Naive thymus-derived CD4-positive, alpha-beta T cell (primary cell): ENCODE measurements at regions of chr12 and their contacts with region 1.

Region 1: GRCh38 chr12:93378373-93379325 is 924 bp downstream of the NUDT4 start:
- DNase-seq: peak; percentile 47 to 73 (median 69)
- ATAC-seq: peak; percentile 60
- H3K4me3 ChIP-seq: peak overlapping the region; percentile 76
- H3K4me3 Mint-ChIP-seq: peak overlapping the region; percentile 98 to 100 (median 99)
- H3K27ac ChIP-seq: peak overlapping the region; percentile 94
- H3K27ac Mint-ChIP-seq: peak overlapping the region; percentile 94 to 100 (median 99)
- H3K4me1 ChIP-seq: peaks cover 19 to 22% of the 10 kb centered on the region in 2 donors
- H3K4me1 Mint-ChIP-seq: peaks cover 34 to 62% (median 51%) of the 10 kb centered on the region in 7 donors
- H3K27me3 ChIP-seq: no peaks in the 10 kb centered on the region
- H3K27me3 Mint-ChIP-seq: no peaks in the 10 kb centered on the region

Region 2: GRCh38 chr12:92593734-92594402 is 784.8 kb before region 1 on chr12:
- CTCF ChIA-PET with region 1: no interaction called
- POLR2A ChIA-PET with region 1: no interaction called
- intact Hi-C with region 1: loop called in 1 of 2 experiments (anchors 5 kb)
- DNase-seq: peak; percentile 51 to 97 (median 92)
- ATAC-seq: peak; percentile 95
- H3K4me3 ChIP-seq: peak overlapping the region; percentile 16
- H3K4me3 Mint-ChIP-seq: peak overlapping the region; percentile 22 to 83 (median 72)
- H3K27ac ChIP-seq: peak overlapping the region; percentile 86
- H3K27ac Mint-ChIP-seq: peak overlapping the region; percentile 90 to 100 (median 98)
- H3K4me1 ChIP-seq: peaks cover 27 to 30% of the 10 kb centered on the region in 2 donors
- H3K4me1 Mint-ChIP-seq: peaks cover 23 to 74% (median 44%) of the 10 kb centered on the region in 7 donors
- H3K27me3 ChIP-seq: no peaks in the 10 kb centered on the region
- H3K27me3 Mint-ChIP-seq: no peaks in the 10 kb centered on the region

Region 3: DNA sequence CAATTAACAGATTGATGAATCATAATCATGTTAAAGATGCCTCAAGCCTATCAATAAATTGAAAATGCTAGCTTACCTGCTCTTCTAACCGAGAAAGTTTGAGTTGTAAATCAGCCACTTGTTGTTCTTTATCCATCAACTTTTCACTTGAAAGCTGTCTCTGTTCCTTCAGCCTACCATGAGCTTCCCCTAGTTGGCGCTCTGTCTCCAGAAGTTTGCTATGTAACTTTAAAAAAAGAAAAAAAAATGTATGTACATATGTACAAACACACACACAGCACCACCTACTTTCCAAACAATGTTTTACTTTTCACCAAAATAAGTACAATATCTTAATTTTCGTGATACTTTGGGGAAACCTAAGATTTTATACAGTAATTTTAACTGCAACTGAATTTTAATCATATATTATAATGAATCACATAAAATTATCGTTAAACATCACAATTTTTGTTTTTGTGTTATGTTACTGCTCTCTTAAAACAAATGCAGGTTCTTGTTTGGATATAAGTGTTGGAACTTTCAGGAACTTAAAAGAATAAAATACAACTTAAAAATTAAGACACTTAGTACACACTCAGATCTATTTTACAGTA is 550.7 kb before region 1 on chr12:
- CTCF ChIA-PET with region 1: no interaction called
- POLR2A ChIA-PET with region 1: no interaction called
- intact Hi-C with region 1: loop called (anchors 1 to 5 kb)
- DNase-seq: peak in 7 of 9 donors; percentile 19 to 58 (median 37)
- ATAC-seq: peak; percentile 74
- H3K4me3 ChIP-seq: no peak overlapping the region
- H3K4me3 Mint-ChIP-seq: no peak overlapping the region
- H3K27ac ChIP-seq: no peak overlapping the region
- H3K27ac Mint-ChIP-seq: no peak overlapping the region
- H3K4me1 ChIP-seq: no peaks in the 10 kb centered on the region
- H3K4me1 Mint-ChIP-seq: peaks cover 0 to 8% (median 2%) of the 10 kb centered on the region in 7 donors
- H3K27me3 ChIP-seq: no peaks in the 10 kb centered on the region
- H3K27me3 Mint-ChIP-seq: no peaks in the 10 kb centered on the region

Region 4: GRCh38 chr12:93080994-93081797 is 297.5 kb before region 1 on chr12:
- CTCF ChIA-PET with region 1: no interaction called
- POLR2A ChIA-PET with region 1: no interaction called
- intact Hi-C with region 1: no loop called
- DNase-seq: no peak
- ATAC-seq: no peak
- H3K4me3 ChIP-seq: no peak overlapping the region
- H3K4me3 Mint-ChIP-seq: no peak overlapping the region
- H3K27ac ChIP-seq: no peak overlapping the region
- H3K27ac Mint-ChIP-seq: no peak overlapping the region
- H3K4me1 ChIP-seq: no peaks in the 10 kb centered on the region
- H3K4me1 Mint-ChIP-seq: no peaks in the 10 kb centered on the region
- H3K27me3 ChIP-seq: no peaks in the 10 kb centered on the region
- H3K27me3 Mint-ChIP-seq: no peaks in the 10 kb centered on the region

Region 5: GRCh38 chr12:93098077-93098476 is 280.6 kb before region 1 on chr12:
- CTCF ChIA-PET with region 1: interaction called, 4 read pairs
- POLR2A ChIA-PET with region 1: no interaction called
- intact Hi-C with region 1: loop called (anchors 1 kb)
- DNase-seq: peak; percentile 33 to 75 (median 62)
- ATAC-seq: peak; percentile 96
- H3K4me3 ChIP-seq: no peak overlapping the region
- H3K4me3 Mint-ChIP-seq: no peak overlapping the region
- H3K27ac ChIP-seq: no peak overlapping the region
- H3K27ac Mint-ChIP-seq: peak overlapping the region in 1 of 9 donors; percentile 2
- H3K4me1 ChIP-seq: no peaks in the 10 kb centered on the region
- H3K4me1 Mint-ChIP-seq: peaks cover 4 to 9% (median 5%) of the 10 kb centered on the region in 7 donors
- H3K27me3 ChIP-seq: no peaks in the 10 kb centered on the region
- H3K27me3 Mint-ChIP-seq: no peaks in the 10 kb centered on the region

Region 6: GRCh38 chr12:93397412-93397811 is 18.8 kb after region 1 on chr12:
- CTCF ChIA-PET with region 1: interaction called, 4 read pairs
- POLR2A ChIA-PET with region 1: no interaction called
- intact Hi-C with region 1: loop called (anchors 1 to 2 kb)
- DNase-seq: no peak
- ATAC-seq: no peak
- H3K4me3 ChIP-seq: no peak overlapping the region
- H3K4me3 Mint-ChIP-seq: no peak overlapping the region
- H3K27ac ChIP-seq: no peak overlapping the region
- H3K27ac Mint-ChIP-seq: peak overlapping the region in 1 of 9 donors; percentile 25
- H3K4me1 ChIP-seq: no peaks in the 10 kb centered on the region
- H3K4me1 Mint-ChIP-seq: peaks cover 0 to 8% (median 5%) of the 10 kb centered on the region in 7 donors
- H3K27me3 ChIP-seq: no peaks in the 10 kb centered on the region
- H3K27me3 Mint-ChIP-seq: no peaks in the 10 kb centered on the region

Region 7: GRCh38 chr12:93467351-93468007 is 88.8 kb after region 1 on chr12 and contains the start of gene MRPL42:
- CTCF ChIA-PET with region 1: no interaction called
- POLR2A ChIA-PET with region 1: no interaction called
- intact Hi-C with region 1: loop called (anchors 1 kb)
- DNase-seq: peak; percentile 86 to 96 (median 94)
- ATAC-seq: peak; percentile 97
- H3K4me3 ChIP-seq: peak within 1 kb of the TSS; percentile 94
- H3K4me3 Mint-ChIP-seq: peak within 1 kb of the TSS; percentile 85 to 96 (median 93)
- H3K27ac ChIP-seq: peak within 1 kb of the TSS; percentile 85
- H3K27ac Mint-ChIP-seq: peak within 1 kb of the TSS; percentile 90 to 98 (median 95)
- H3K4me1 ChIP-seq: peaks cover 8 to 10% of the 10 kb centered on the region in 2 donors
- H3K4me1 Mint-ChIP-seq: peaks cover 28 to 48% (median 36%) of the 10 kb centered on the region in 7 donors
- H3K27me3 ChIP-seq: no peaks in the 10 kb centered on the region
- H3K27me3 Mint-ChIP-seq: no peaks in the 10 kb centered on the region
- total RNA-seq, gene MRPL42: 30.1 to 65.8 (median 45.6) TPM

Region 8: DNA sequence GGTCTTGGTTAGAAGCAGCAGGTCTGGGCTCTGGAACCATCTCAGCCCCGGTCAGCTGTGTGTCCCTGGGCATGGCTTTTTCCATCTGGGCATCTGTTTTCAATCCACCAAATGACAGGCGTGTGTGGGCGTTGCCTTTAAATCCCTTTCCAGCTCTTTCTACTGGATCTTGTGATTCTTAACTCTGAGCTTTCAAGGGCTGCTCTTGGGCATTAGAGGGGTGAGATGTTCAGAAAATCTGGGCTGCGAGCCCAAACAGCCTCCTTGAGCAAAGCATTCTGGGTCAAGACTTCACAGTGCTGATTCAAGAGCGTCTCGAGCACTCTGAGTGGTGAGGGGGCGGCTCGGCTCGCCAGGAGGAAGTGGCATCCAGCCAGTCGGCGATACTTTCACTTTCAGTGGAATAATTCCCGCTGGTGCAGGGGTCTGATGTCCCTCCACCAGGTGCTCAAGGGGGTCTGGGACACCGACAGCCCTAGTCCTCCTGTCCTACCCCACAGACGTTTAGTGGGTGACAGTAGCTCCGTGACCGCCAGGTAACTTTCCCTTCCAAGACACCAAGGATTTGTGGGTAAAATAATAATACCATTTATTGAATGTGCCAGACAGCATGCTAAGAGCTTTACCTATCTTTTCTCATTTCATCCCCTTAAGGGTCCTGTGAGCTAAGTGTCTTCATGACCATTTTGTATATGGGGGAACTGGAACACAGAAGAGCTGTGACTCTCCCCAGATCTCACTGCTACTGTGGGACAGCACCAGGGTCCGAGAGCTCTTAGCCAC is 883.8 kb after region 1 on chr12:
- CTCF ChIA-PET with region 1: no interaction called
- POLR2A ChIA-PET with region 1: no interaction called
- intact Hi-C with region 1: loop called in 1 of 2 experiments (anchors 2 kb)
- DNase-seq: peak; percentile 50 to 81 (median 72)
- ATAC-seq: peak; percentile 89
- H3K4me3 ChIP-seq: peak overlapping the region; percentile 94
- H3K4me3 Mint-ChIP-seq: peak overlapping the region; percentile 80 to 99 (median 97)
- H3K27ac ChIP-seq: peak overlapping the region; percentile 91
- H3K27ac Mint-ChIP-seq: peak overlapping the region; percentile 91 to 100 (median 99)
- H3K4me1 ChIP-seq: peaks cover 15 to 18% of the 10 kb centered on the region in 2 donors
- H3K4me1 Mint-ChIP-seq: peaks cover 23 to 52% (median 46%) of the 10 kb centered on the region in 7 donors
- H3K27me3 ChIP-seq: no peaks in the 10 kb centered on the region
- H3K27me3 Mint-ChIP-seq: no peaks in the 10 kb centered on the region